ENCODE measurements at regions of chr5 and their contacts with region 1.

Region 1: DNA sequence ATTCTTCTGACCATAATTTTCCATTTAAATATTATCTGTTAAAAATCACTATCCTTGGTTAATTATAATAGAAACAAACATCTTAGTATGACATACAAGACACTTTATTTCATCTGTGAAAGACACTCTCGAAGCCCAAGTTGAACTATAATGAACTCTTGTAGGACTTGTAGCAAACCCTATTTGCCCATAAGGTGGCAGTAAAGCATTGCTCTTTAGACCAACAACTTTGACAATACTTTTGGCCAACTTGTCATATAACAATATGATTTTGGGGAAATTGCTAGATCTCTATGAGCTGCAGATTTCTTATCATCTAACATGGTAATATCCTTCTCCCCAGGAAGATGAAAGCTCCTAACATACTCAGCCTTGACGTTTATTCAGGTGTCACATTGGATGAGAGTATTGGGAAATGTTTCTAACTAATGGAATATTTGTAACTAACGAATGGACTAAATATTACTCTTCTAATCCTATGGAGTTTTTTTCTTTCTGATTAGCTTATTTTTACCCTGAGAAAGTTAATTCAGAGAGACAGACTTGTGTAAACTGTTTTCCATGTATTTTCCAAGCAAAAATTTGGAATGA is 11.0 kb downstream of the SPINK14 start:
- DNase-seq: peak; percentile 61
- H3K4me3 ChIP-seq: no peak overlapping the region
- H3K27ac ChIP-seq: no peak overlapping the region
- H3K4me1 ChIP-seq: no peaks in the 10 kb centered on the region
- CTCF ChIP-seq: peak; percentile 87

Region 2: GRCh38 chr5:148374692-148375360 is 195.5 kb after region 1 on chr5:
- CTCF ChIA-PET with region 1: no interaction called
- POLR2A ChIA-PET with region 1: interaction called, 3 read pairs
- intact Hi-C with region 1: loop called (anchors 2 kb)
- DNase-seq: peak; percentile 41
- H3K4me3 ChIP-seq: no peak overlapping the region
- H3K27ac ChIP-seq: no peak overlapping the region
- H3K4me1 ChIP-seq: no peaks in the 10 kb centered on the region
- CTCF ChIP-seq: peak; percentile 82